ENCODE measurements at regions of chr3 and their contacts with region 1.

Region 1: DNA sequence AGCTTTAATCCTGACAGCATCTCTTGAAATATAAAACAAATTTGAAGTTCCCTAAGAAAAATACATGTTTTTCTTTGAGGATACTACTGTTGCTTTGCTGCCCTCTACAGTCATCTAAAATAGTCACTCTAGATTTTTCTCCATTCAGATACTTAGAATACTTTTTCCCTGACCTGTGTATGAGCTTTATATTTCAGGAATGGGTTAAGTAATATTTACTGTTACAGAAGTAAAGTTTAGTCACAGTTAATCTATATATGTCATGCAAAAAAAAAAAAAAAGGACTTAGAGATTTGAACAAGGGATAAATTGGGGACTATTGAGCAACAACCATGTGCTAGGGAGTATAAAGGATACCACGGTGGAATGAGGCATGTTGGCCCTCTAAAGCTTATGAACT is 8.8 kb downstream of the NECTIN3 start:
- DNase-seq: no peak
- H3K4me3 ChIP-seq: no peak overlapping the region
- H3K27ac ChIP-seq: no peak overlapping the region
- H3K4me1 ChIP-seq: peaks cover under 1 to 22% (median 12%) of the 10 kb centered on the region in 4 experiments; a peak in 6 of 7 replicates
- H3K27me3 ChIP-seq: no peaks in the 10 kb centered on the region
- CTCF ChIP-seq: peak in 1 of 3 experiments; percentile 41; a peak in 2 of 4 replicates
- EP300 ChIP-seq: no peak
- POLR2A ChIP-seq: no peak
- RAD21 ChIP-seq: peak in 1 of 2 experiments; percentile 59

Region 2: GRCh38 chr3:110965976-110966375 is 114.4 kb before region 1 on chr3:
- CTCF ChIA-PET with region 1: interaction called, 7 read pairs
- POLR2A ChIA-PET with region 1: interaction called, 12 read pairs
- DNase-seq: no peak
- H3K4me3 ChIP-seq: peak overlapping the region in 1 of 4 experiments; percentile 75; a peak in 3 of 8 replicates
- H3K27ac ChIP-seq: 0 out of 2 replicates have a peak overlapping the region, but pooled peaks have one; percentile 28
- H3K4me1 ChIP-seq: no peaks in the 10 kb centered on the region
- H3K27me3 ChIP-seq: no peaks in the 10 kb centered on the region
- CTCF ChIP-seq: no peak
- EP300 ChIP-seq: no peak
- POLR2A ChIP-seq: peak; percentile 22 to 44; a peak in 1 of 3 replicates
- RAD21 ChIP-seq: no peak

Region 3: GRCh38 chr3:111012388-111013248 is 67.8 kb before region 1 on chr3:
- CTCF ChIA-PET with region 1: interaction called, 12 read pairs
- POLR2A ChIA-PET with region 1: no interaction called
- DNase-seq: no peak
- H3K4me3 ChIP-seq: no peak overlapping the region
- H3K27ac ChIP-seq: no peak overlapping the region
- H3K4me1 ChIP-seq: no peaks in the 10 kb centered on the region
- H3K27me3 ChIP-seq: no peaks in the 10 kb centered on the region
- CTCF ChIP-seq: peak; percentile 57 to 67 (median 63)
- EP300 ChIP-seq: no peak
- POLR2A ChIP-seq: no peak
- RAD21 ChIP-seq: peak; percentile 80 to 86

Region 4: GRCh38 chr3:111049256-111049655 is 31.2 kb before region 1 on chr3:
- CTCF ChIA-PET with region 1: no interaction called
- POLR2A ChIA-PET with region 1: no interaction called
- DNase-seq: no peak
- H3K4me3 ChIP-seq: no peak overlapping the region
- H3K27ac ChIP-seq: no peak overlapping the region
- H3K4me1 ChIP-seq: peaks cover 0 to 17% (median 9%) of the 10 kb centered on the region in 4 experiments; a peak in 5 of 7 replicates
- H3K27me3 ChIP-seq: no peaks in the 10 kb centered on the region
- CTCF ChIP-seq: no peak
- EP300 ChIP-seq: no peak
- POLR2A ChIP-seq: no peak
- RAD21 ChIP-seq: no peak

Region 5: DNA sequence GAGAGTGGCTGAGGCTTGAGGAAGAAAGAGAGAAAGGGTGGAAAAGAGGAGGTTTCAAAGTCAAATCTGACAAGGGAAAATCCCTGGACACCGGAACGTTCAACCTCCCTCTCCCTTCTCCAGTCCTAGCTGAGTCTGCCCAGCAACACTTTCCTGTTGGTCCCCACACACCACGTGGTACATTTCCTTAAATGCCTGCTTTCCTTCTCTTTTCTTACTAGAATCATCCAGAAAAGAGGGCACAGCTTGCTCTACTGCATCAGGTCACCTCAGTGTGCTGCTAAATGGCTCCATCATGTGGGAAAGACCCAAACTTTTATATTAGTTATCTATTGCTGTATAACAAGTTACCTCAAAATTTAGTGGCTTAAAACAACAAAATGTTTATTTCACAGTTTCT is 172.4 kb after region 1 on chr3:
- CTCF ChIA-PET with region 1: interaction called, 11 read pairs
- POLR2A ChIA-PET with region 1: no interaction called
- DNase-seq: no peak
- H3K4me3 ChIP-seq: no peak overlapping the region
- H3K27ac ChIP-seq: no peak overlapping the region
- H3K4me1 ChIP-seq: no peaks in the 10 kb centered on the region
- H3K27me3 ChIP-seq: no peaks in the 10 kb centered on the region
- CTCF ChIP-seq: peak in 2 of 3 experiments; percentile 7 to 34; a peak in 2 of 4 replicates
- EP300 ChIP-seq: no peak
- POLR2A ChIP-seq: no peak
- RAD21 ChIP-seq: peak; percentile 67 to 72